Dorsolateral prefrontal cortex (tissue), 120 donors: ENCODE measurements at regions of chr7 and their contacts with region 1.

Region 1: GRCh38 chr7:85186521-85187241 is at the start of gene SEMA3D:
- DNase-seq: peak; percentile 18 to 88 (median 60)
- H3K4me3 ChIP-seq: peak within 1 kb of the TSS; percentile 40 to 78 (median 65)
- H3K27ac ChIP-seq: peak within 1 kb of the TSS in 20 of 59 donors; percentile 0 to 64 (median 37)
- H3K27me3 ChIP-seq: peaks cover 0 to 3% (median 0%) of the 10 kb centered on the region in 45 donors
- CTCF ChIP-seq: peak; percentile 55 to 91 (median 79)
- total RNA-seq, gene SEMA3D: 2.4 to 14.7 (median 6.6) TPM

Region 2: GRCh38 chr7:85041605-85042216 is 145.0 kb before region 1 on chr7:
- intact Hi-C with region 1: loop called in 1 of 2 experiments (anchors 5 kb)
- DNase-seq: peak; percentile 24 to 72 (median 54)
- H3K4me3 ChIP-seq: no peak overlapping the region
- H3K27ac ChIP-seq: no peak overlapping the region
- H3K27me3 ChIP-seq: peaks cover 0 to 3% (median 0%) of the 10 kb centered on the region in 45 donors
- CTCF ChIP-seq: peak; percentile 57 to 91 (median 76)

Region 3: GRCh38 chr7:85230623-85231022 is 43.9 kb after region 1 on chr7:
- intact Hi-C with region 1: loop called in 1 of 2 experiments (anchors 5 kb)
- DNase-seq: no peak
- H3K4me3 ChIP-seq: no peak overlapping the region
- H3K27ac ChIP-seq: no peak overlapping the region
- H3K27me3 ChIP-seq: no peaks in the 10 kb centered on the region
- CTCF ChIP-seq: no peak

Region 4: GRCh38 chr7:85328456-85329090 is 141.9 kb after region 1 on chr7:
- intact Hi-C with region 1: no loop called
- DNase-seq: no peak
- H3K4me3 ChIP-seq: no peak overlapping the region
- H3K27ac ChIP-seq: no peak overlapping the region
- H3K27me3 ChIP-seq: no peaks in the 10 kb centered on the region
- CTCF ChIP-seq: no peak

Region 5: DNA sequence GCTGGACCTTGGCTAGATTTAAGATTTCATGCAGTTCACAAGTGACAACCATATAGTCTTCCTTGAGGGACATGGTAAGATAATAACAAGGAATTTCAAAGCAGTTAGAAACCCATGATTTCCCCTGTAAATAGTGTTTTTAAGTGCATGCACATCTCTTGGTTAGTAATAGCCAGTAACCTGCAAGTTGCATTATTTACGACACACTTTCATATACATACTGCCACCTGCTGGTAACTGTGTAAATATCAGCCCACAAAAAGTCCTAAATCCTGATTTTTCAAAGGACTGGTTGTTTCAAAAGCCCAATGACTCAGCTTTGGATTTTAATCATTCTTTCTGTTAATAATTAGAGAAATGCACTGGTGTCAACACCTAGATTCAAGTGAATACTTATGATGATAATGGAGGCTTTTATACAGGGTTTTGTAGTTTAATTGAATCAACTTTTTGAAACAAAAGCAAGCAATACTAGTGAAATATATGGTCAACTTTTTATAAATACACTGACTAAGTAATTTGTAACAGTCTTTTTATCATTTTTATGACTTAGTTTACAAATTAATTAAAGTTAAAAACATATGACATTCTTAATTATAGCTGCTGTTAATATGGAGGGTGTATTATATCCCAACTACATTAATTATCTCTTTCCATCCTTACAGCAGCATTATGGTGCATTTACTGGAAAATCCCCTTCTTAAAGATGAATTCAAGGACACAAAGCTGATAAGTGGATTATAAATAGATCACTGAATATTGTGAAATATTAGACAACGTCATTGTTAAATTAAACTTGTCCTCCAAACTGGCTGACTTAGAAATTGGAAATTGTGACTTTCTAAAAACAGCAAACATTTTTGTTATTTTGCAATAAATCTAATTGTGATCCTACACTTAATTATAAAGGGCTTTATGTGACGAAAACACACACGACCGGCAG is 367.8 kb after region 1 on chr7:
- intact Hi-C with region 1: loop called in 1 of 2 experiments (anchors 5 kb)
- DNase-seq: no peak
- H3K4me3 ChIP-seq: no peak overlapping the region
- H3K27ac ChIP-seq: no peak overlapping the region
- H3K27me3 ChIP-seq: no peaks in the 10 kb centered on the region
- CTCF ChIP-seq: peak; percentile 59 to 91 (median 80)